Activated naive CD4-positive, alpha-beta T cell treated with anti-CD3 and anti-CD28 coated beads for 36 hours (primary cell): ENCODE measurements at regions of chr2 and their contacts with region 1.

Region 1: DNA sequence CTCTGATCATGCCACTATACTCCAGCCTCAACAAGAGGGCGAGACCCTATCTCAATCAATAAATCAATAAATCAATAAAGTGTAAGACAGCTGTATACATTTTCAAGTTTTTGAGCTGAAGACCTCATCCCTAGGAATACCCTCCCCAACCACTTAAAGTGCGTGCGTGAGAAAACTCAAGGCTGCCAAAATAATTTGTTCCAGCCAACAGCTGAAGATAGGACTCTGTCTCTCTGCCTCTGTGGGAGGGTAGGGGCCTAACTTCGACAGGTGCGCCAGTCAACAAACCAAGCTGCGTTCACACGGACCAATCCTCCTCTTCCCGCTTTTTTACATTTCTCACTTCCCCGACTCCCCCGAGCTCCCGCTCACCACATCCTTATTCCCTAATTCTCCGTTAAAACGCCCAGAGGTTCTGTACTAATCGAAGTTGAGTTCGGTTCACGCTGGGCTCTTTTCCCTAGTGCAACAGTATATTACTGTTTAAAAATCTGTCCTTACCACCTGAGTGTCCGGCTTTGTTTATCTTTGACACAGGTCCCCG is 618 bp downstream of the POLR2D start:
- DNase-seq: peak; percentile 32
- H3K4me3 Mint-ChIP-seq: peak overlapping the region; percentile 99
- H3K27ac Mint-ChIP-seq: peak overlapping the region; percentile 91
- H3K4me1 Mint-ChIP-seq: peaks cover 53% of the 10 kb centered on the region
- H3K27me3 Mint-ChIP-seq: no peaks in the 10 kb centered on the region

Region 2: DNA sequence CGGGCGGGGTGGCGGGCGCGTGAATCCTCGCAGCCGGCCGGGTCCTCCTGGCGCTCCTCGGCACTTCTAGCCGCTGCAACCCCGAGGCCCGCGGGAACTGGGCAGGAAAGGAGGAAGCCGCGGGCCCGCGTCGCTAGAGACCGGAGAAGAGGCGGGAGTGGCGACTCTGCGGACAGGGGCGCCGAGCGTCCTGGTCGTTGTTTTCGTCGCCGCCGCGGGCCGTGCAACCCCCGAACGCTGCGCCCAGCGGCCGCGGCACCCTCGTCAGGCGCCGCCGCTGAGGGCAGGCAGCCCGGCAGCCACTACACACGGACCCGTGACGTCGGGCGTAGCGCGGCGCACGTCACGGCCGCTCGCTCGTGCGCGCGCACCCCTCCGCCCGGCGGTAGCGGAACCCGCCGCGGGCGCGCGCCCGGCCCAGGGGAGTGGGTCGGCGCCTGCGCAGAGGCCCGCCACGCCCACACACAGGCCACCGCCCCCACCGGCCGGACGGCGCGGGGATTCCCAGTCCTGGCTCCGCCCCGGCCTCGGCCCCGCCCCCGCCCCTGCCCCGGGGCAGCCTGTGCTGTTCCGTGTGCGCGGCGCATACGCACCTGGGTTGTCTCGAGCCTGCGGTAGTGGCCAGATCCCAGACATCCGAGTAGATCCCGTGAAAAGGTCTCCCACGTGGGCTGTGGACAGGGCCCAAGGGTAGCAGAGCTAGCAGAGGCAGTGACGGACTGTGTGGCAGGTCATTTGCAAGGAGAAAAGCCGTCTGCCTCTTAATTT is 469.5 kb before region 1 on chr2 and contains the start of gene MAP3K2:
- CTCF ChIA-PET with region 1: no interaction called
- intact Hi-C with region 1: loop called (anchors 1 kb)
- DNase-seq: peak; percentile 92
- H3K4me3 Mint-ChIP-seq: peak within 1 kb of the TSS; percentile 85
- H3K27ac Mint-ChIP-seq: peak within 1 kb of the TSS; percentile 92
- H3K4me1 Mint-ChIP-seq: peaks cover 69% of the 10 kb centered on the region
- H3K27me3 Mint-ChIP-seq: no peaks in the 10 kb centered on the region
- total RNA-seq, gene MAP3K2: 27.1 to 27.4 TPM

Region 3: GRCh38 chr2:127790694-127791529 is 66.4 kb before region 1 on chr2:
- CTCF ChIA-PET with region 1: no interaction called
- intact Hi-C with region 1: no loop called
- DNase-seq: no peak
- H3K4me3 Mint-ChIP-seq: no peak overlapping the region
- H3K27ac Mint-ChIP-seq: no peak overlapping the region
- H3K4me1 Mint-ChIP-seq: peaks cover 29% of the 10 kb centered on the region
- H3K27me3 Mint-ChIP-seq: no peaks in the 10 kb centered on the region

Region 4: DNA sequence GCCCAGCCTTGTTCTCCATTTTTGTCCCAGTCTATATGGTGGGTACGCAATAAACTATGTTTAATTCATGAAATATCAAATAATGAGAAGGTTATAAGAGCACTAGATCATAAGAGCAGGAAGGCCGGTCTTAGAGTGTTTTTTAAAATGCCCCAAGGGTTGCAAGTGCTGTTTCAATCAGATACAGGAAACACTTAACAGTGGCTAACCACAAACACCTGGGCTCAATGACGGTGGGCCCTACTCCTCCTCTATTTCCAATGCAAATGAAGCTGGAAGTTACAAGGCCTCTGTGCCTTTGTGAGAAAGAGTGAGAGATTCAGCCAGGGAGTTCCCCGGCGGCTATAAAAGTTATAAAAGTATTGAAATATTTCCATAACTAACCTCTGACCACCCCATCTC is 27.5 kb before region 1 on chr2:
- CTCF ChIA-PET with region 1: interaction called, 7 read pairs
- intact Hi-C with region 1: loop called (anchors 1 kb)
- DNase-seq: peak; percentile 91
- H3K4me3 Mint-ChIP-seq: no peak overlapping the region
- H3K27ac Mint-ChIP-seq: peak overlapping the region; percentile 78
- H3K4me1 Mint-ChIP-seq: peaks cover 25% of the 10 kb centered on the region
- H3K27me3 Mint-ChIP-seq: no peaks in the 10 kb centered on the region

Region 5: GRCh38 chr2:127884436-127885345 is 27.4 kb after region 1 on chr2:
- CTCF ChIA-PET with region 1: interaction called, 4 read pairs
- intact Hi-C with region 1: loop called (anchors 2 kb)
- DNase-seq: no peak
- H3K4me3 Mint-ChIP-seq: peak overlapping the region; percentile 86
- H3K27ac Mint-ChIP-seq: peak overlapping the region; percentile 71
- H3K4me1 Mint-ChIP-seq: peaks cover 60% of the 10 kb centered on the region
- H3K27me3 Mint-ChIP-seq: no peaks in the 10 kb centered on the region

Region 6: DNA sequence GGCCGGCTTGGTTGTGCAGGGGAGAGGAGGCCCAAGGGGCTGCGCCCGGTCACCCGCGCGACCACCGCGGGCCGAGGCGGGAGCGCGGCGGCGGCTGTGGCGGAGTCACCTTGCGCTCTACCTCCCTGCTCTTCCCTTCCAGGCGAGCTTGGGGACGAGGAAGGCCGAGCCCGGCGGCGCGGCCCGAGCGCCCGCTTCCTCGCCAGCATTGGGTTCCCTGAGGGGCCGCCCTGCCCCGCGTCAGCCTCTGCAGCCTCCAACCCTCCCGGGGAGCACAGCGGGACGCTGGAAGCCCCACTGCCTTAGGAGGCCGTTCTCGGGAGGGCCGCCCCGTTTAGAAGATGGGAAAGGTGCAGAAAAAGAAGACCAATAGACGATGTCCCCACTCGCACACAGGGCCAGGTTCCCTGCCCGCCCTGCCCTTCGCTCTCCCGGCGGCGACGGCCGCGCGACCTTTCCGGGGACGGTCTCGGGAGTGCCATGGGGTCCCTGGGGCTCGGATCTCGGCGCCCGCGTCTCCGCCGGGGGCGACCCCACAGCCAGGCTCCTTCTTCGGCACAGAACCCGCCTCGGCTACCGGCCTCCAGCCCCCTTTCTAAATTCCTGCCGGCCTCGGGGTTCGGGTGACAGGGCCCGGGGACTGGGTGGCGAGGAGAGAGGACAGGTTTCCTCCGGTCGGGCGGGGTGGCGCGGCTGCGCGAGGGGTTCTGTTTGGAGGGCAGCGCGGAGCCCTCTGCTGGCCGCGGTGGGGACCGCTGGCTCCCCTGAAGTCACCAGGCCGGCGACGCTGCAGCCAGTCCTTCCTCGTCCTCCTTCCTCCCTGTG is 375.8 kb after region 1 on chr2:
- CTCF ChIA-PET with region 1: no interaction called
- intact Hi-C with region 1: loop called (anchors 1 kb)
- DNase-seq: peak; percentile 91
- H3K4me3 Mint-ChIP-seq: peak overlapping the region; percentile 71
- H3K27ac Mint-ChIP-seq: no peak overlapping the region
- H3K4me1 Mint-ChIP-seq: peaks cover 4% of the 10 kb centered on the region
- H3K27me3 Mint-ChIP-seq: no peaks in the 10 kb centered on the region